A549 (cell line): ENCODE measurements at regions of chr7 and their contacts with region 1.

Region 1: GRCh38 chr7:158695726-158696452 is 8.7 kb downstream of the NCAPG2 start:
- DNase-seq: peak; percentile 51 to 76
- ATAC-seq: peak; percentile 96
- H3K4me3 ChIP-seq: no peak overlapping the region
- H3K27ac ChIP-seq: peak overlapping the region; percentile 10 to 18; a peak in 3 of 6 replicates
- H3K4me1 ChIP-seq: peaks cover 6% of the 10 kb centered on the region; the same call in 2 of the 3 replicates
- CTCF ChIP-seq: peak; percentile 65
- EP300 ChIP-seq: no peak
- POLR2A ChIP-seq: no peak
- RAD21 ChIP-seq: peak; percentile 71 to 75

Region 2: DNA sequence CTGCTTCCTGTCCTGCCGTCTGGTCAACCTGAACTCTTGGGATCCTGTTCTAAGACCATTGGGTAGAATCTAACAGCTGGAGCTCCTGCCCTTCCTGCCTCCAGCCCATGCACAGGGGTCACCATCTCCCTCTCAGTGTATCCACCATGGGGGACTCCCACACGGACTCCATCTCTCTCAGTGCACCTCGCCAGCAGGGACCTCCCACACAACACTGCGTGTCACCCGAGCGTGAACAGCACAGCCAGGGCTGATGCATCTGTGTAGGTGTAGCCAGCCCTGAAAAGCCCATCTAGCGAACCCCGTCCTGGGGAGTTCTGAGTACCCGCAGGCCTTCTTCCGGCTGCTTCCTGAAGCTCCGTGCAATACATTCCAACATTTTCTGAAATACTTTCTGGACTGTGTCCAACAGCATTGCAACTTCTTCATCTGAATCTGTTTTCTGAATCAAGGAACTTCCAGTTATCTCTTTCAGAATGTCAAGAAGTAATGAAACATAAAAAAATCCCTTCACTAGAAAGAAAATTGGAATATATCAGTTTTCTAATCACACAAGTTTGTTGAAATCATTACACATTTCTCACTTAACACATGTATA is 43.8 kb before region 1 on chr7:
- CTCF ChIA-PET with region 1: no interaction called
- POLR2A ChIA-PET with region 1: no interaction called
- DNase-seq: no peak
- ATAC-seq: no peak
- H3K4me3 ChIP-seq: no peak overlapping the region
- H3K27ac ChIP-seq: no peak overlapping the region
- H3K4me1 ChIP-seq: peaks cover 17% of the 10 kb centered on the region
- CTCF ChIP-seq: no peak
- EP300 ChIP-seq: no peak
- POLR2A ChIP-seq: no peak
- RAD21 ChIP-seq: no peak

Region 3: DNA sequence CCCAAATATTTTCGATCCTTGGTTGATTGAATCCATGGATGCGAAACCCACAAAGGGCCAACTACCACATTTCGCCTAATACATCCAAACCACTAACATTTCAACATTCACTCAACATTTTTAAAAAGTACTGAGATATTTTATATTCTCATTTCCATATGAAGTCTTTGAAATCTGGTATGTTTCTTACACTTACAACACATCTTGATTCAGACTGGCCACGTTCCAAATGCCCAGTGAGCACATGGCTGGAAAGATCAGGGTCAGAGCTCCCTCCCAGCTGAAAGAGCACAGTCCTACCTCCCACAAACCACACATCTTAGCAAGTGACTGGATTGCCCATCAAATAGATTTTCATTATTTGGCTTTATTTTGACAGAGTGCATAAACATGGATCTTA is 10.2 kb before region 1 on chr7:
- CTCF ChIA-PET with region 1: interaction called, 12 read pairs
- POLR2A ChIA-PET with region 1: no interaction called
- DNase-seq: no peak
- ATAC-seq: no peak
- H3K4me3 ChIP-seq: no peak overlapping the region
- H3K27ac ChIP-seq: no peak overlapping the region
- H3K4me1 ChIP-seq: 0 out of 3 replicates have a peak, but pooled peaks cover 3% of the 10 kb centered on the region
- CTCF ChIP-seq: no peak
- EP300 ChIP-seq: no peak
- POLR2A ChIP-seq: no peak
- RAD21 ChIP-seq: no peak

Region 4: GRCh38 chr7:158740013-158740656 is 44.2 kb after region 1 on chr7:
- CTCF ChIA-PET with region 1: interaction called, 13 read pairs
- POLR2A ChIA-PET with region 1: no interaction called
- DNase-seq: peak in 1 of 2 experiments; percentile 32
- ATAC-seq: peak; percentile 67 to 71; a peak in 5 of 6 replicates
- H3K4me3 ChIP-seq: peak overlapping the region; percentile 13; the same call in 1 of the 3 replicates
- H3K27ac ChIP-seq: peak overlapping the region; percentile 72 to 81
- H3K4me1 ChIP-seq: peaks cover 28% of the 10 kb centered on the region
- CTCF ChIP-seq: no peak
- EP300 ChIP-seq: no peak
- POLR2A ChIP-seq: no peak
- RAD21 ChIP-seq: no peak

Region 5: GRCh38 chr7:158891922-158892321 is 196.0 kb after region 1 on chr7:
- CTCF ChIA-PET with region 1: no interaction called
- POLR2A ChIA-PET with region 1: no interaction called
- DNase-seq: no peak
- ATAC-seq: no peak
- H3K4me3 ChIP-seq: no peak overlapping the region
- H3K27ac ChIP-seq: no peak overlapping the region
- H3K4me1 ChIP-seq: no peaks in the 10 kb centered on the region
- CTCF ChIP-seq: no peak
- EP300 ChIP-seq: no peak
- POLR2A ChIP-seq: no peak
- RAD21 ChIP-seq: no peak

Region 6: GRCh38 chr7:159049266-159050025 is 353.6 kb after region 1 on chr7:
- CTCF ChIA-PET with region 1: no interaction called
- POLR2A ChIA-PET with region 1: no interaction called
- DNase-seq: no peak
- ATAC-seq: no peak
- H3K4me3 ChIP-seq: no peak overlapping the region
- H3K27ac ChIP-seq: no peak overlapping the region
- H3K4me1 ChIP-seq: no peaks in the 10 kb centered on the region
- CTCF ChIP-seq: no peak
- EP300 ChIP-seq: no peak
- POLR2A ChIP-seq: no peak
- RAD21 ChIP-seq: no peak